Gastrocnemius medialis (tissue), 4 donors: ENCODE measurements at regions of chr16 and their contacts with region 1.

Region 1: DNA sequence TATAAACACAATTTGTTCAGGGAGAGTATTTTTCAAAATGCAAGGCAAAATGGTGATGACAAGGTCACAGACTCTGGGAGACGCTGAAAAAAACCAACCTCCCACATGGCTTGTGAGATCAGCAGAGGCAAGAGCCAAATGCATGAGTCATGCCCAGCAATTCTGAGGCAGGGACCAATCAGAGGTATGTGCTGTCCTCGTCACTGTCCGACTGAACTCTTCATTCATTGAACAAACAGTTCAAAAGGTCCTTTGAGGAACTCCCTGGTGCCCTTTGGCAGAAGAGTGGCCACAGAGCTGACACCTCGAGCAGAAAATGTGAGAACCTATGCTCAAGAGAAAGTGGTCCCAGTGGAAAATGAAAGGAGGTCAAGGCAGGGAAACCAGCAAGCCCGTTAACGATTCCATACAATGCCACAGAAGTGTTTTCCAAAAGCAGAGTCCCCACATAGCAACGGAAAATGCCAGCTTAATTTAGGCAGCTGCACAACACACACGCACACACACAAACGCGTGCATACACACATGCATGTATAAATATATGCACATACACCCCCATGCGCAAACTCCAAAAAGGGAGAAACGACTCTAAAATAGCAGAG is 50.9 kb downstream of the CDH11 start:
- DNase-seq: peak; percentile 85 to 92
- ATAC-seq: peak; percentile 78
- H3K4me3 ChIP-seq: peak overlapping the region; percentile 34 to 56 (median 42)
- H3K27ac ChIP-seq: peak overlapping the region; percentile 86 to 93 (median 92)
- H3K4me1 ChIP-seq: peaks cover 36 to 45% of the 10 kb centered on the region in 2 donors
- H3K27me3 ChIP-seq: no peaks in the 10 kb centered on the region
- CTCF ChIP-seq: no peak
- POLR2A ChIP-seq: peak in 1 of 2 donors; percentile 35

Region 2: DNA sequence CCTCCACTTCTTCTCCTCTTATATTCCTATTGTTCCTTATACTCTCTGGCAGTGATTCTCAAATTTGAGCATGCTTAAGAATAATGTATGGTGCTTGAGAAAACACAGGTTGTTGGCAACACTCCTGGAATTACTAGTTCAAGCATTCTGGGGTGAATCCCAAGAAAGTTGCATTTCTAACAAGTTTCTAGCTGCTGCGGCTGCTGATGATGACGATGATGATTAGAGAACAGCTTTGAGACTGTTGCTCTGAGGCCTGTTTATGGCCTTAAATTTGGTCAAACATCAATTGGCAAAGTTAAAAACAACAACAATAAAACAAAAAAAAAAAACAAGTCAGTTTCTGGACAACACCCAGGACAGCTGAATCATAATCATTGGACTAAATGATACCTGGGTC is 911.0 kb before region 1 on chr16:
- in situ Hi-C with region 1: no loop called
- intact Hi-C with region 1: loop called (anchors 5 kb)
- DNase-seq: no peak
- ATAC-seq: no peak
- H3K4me3 ChIP-seq: no peak overlapping the region
- H3K27ac ChIP-seq: no peak overlapping the region
- H3K4me1 ChIP-seq: no peaks in the 10 kb centered on the region
- H3K27me3 ChIP-seq: no peaks in the 10 kb centered on the region
- CTCF ChIP-seq: no peak
- POLR2A ChIP-seq: no peak

Region 3: DNA sequence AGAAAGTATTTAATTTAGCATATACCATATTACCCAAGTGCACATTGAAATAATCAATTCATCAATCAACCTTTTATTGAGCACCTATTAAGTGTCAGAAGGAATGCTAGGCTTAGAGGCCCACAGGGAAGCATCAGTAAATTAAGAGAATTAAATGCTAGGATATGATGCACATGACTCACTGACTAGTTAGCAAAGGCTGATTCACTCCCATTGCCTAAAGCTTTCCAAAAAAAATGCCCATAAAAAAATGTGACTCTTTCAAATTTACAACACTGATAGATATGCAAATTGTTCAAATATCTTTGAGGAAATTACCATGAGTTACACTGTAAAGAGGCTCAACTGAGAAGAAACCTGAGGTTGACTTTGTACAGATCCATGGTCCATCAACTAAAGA is 832.4 kb before region 1 on chr16:
- in situ Hi-C with region 1: no loop called
- intact Hi-C with region 1: loop called (anchors 5 kb)
- DNase-seq: no peak
- ATAC-seq: no peak
- H3K4me3 ChIP-seq: no peak overlapping the region
- H3K27ac ChIP-seq: no peak overlapping the region
- H3K4me1 ChIP-seq: peaks cover 24 to 31% of the 10 kb centered on the region in 2 donors
- H3K27me3 ChIP-seq: no peaks in the 10 kb centered on the region
- CTCF ChIP-seq: no peak
- POLR2A ChIP-seq: no peak

Region 4: GRCh38 chr16:64250866-64251265 is 820.1 kb before region 1 on chr16:
- in situ Hi-C with region 1: no loop called
- intact Hi-C with region 1: loop called (anchors 5 kb)
- DNase-seq: peak in 1 of 2 donors; percentile 14
- ATAC-seq: peak; percentile 87 to 96
- H3K4me3 ChIP-seq: no peak overlapping the region
- H3K27ac ChIP-seq: peak overlapping the region in 3 of 4 donors; percentile 54 to 79 (median 72)
- H3K4me1 ChIP-seq: peaks cover 29 to 33% of the 10 kb centered on the region in 2 donors
- H3K27me3 ChIP-seq: no peaks in the 10 kb centered on the region
- CTCF ChIP-seq: no peak
- POLR2A ChIP-seq: no peak

Region 5: GRCh38 chr16:65117811-65118448 is 47.0 kb after region 1 on chr16:
- in situ Hi-C with region 1: no loop called
- intact Hi-C with region 1: loop called (anchors 1 kb)
- DNase-seq: peak in 1 of 2 donors; percentile 61
- ATAC-seq: peak; percentile 78 to 84
- H3K4me3 ChIP-seq: no peak overlapping the region
- H3K27ac ChIP-seq: peak overlapping the region in 1 of 4 donors; percentile 48
- H3K4me1 ChIP-seq: peaks cover 0 to 13% of the 10 kb centered on the region in 2 donors
- H3K27me3 ChIP-seq: peaks cover 4 to 23% (median 9%) of the 10 kb centered on the region in 3 donors
- CTCF ChIP-seq: peak; percentile 80 to 88 (median 87)
- POLR2A ChIP-seq: no peak

Region 6: GRCh38 chr16:66036793-66037715 is 966.1 kb after region 1 on chr16:
- in situ Hi-C with region 1: loop called in 1 of 4 experiments (anchors 25 kb)
- intact Hi-C with region 1: loop called (anchors 10 kb)
- DNase-seq: peak; percentile 76 to 82
- ATAC-seq: peak; percentile 92
- H3K4me3 ChIP-seq: no peak overlapping the region
- H3K27ac ChIP-seq: peak overlapping the region; percentile 66 to 81 (median 69)
- H3K4me1 ChIP-seq: peaks cover 16 to 27% of the 10 kb centered on the region in 2 donors
- H3K27me3 ChIP-seq: no peaks in the 10 kb centered on the region
- CTCF ChIP-seq: no peak
- POLR2A ChIP-seq: no peak